ENCODE measurements at regions of chr2 and their contacts with region 1.

Region 1: DNA sequence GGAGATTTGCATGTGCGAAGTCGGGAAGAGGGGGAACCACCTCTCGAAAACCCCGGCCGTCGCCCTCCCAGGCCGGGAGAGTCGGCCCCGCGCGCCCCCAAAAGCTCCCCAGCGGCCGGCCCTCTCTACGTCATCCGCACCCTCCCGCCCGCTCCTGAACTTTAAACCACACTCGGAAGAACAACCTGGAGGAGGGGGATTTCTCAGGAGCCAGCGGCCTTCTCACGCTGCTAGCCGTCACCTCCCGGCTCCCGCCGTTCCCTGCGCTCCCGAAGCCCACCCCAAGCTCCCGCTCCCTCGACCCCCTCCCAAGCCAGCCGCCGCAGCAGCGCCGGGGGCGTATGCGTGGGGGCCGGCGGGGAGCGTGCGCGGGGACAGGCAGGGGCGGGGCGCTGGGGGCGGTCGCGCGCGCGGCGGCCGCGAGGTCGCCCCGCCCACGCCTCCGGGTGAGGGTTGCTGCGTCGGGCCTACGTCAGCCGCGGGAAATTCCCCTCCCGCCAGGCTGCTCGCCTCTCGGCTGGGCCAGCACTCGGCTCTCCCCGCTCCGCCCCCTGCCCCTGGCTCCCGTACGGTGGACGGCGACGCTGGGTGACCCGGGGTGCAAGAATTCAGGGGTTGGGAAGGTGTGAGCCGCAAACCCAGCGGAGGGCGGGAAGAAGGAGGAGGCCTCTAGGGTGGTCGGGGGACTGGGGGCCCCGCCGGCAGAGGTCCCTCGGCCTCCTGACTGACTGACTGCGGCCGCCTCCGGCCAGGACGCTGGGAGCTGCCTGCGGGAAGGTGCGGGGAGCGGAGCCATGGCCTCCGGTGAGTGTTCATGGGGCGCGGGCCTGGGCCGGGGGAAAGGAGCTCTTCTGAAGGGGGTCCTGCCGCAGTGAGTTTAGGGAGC is at the start of gene REL:
- DNase-seq: peak; percentile 87
- H3K4me3 Mint-ChIP-seq: peak within 1 kb of the TSS; percentile 99
- H3K27ac Mint-ChIP-seq: peak within 1 kb of the TSS; percentile 97
- H3K4me1 Mint-ChIP-seq: peaks cover 25% of the 10 kb centered on the region
- H3K27me3 Mint-ChIP-seq: no peaks in the 10 kb centered on the region
- total RNA-seq, gene REL: 118 and 123 TPM in 2 replicates

Region 2: GRCh38 chr2:60756191-60757041 is 124.9 kb before region 1 on chr2 and contains the start of gene PAPOLG:
- intact Hi-C with region 1: loop called (anchors 2 kb)
- DNase-seq: peak; percentile 94
- H3K4me3 Mint-ChIP-seq: peak within 1 kb of the TSS; percentile 96
- H3K27ac Mint-ChIP-seq: peak within 1 kb of the TSS; percentile 96
- H3K4me1 Mint-ChIP-seq: peaks cover 29% of the 10 kb centered on the region
- H3K27me3 Mint-ChIP-seq: no peaks in the 10 kb centered on the region
- total RNA-seq, gene PAPOLG: 20.4 and 21.2 TPM in 2 replicates

Region 3: GRCh38 chr2:60806988-60807681 is 74.2 kb before region 1 on chr2:
- intact Hi-C with region 1: loop called (anchors 2 kb)
- DNase-seq: no peak
- H3K4me3 Mint-ChIP-seq: peak overlapping the region; percentile 10
- H3K27ac Mint-ChIP-seq: peak overlapping the region; percentile 89
- H3K4me1 Mint-ChIP-seq: peaks cover 48% of the 10 kb centered on the region
- H3K27me3 Mint-ChIP-seq: no peaks in the 10 kb centered on the region

Region 4: GRCh38 chr2:61006486-61007105 is 125.3 kb after region 1 on chr2:
- intact Hi-C with region 1: no loop called
- DNase-seq: no peak
- H3K4me3 Mint-ChIP-seq: no peak overlapping the region
- H3K27ac Mint-ChIP-seq: no peak overlapping the region
- H3K4me1 Mint-ChIP-seq: no peaks in the 10 kb centered on the region
- H3K27me3 Mint-ChIP-seq: no peaks in the 10 kb centered on the region

Region 5: GRCh38 chr2:61090386-61090921 is 209.2 kb after region 1 on chr2:
- intact Hi-C with region 1: no loop called
- DNase-seq: no peak
- H3K4me3 Mint-ChIP-seq: no peak overlapping the region
- H3K27ac Mint-ChIP-seq: no peak overlapping the region
- H3K4me1 Mint-ChIP-seq: no peaks in the 10 kb centered on the region
- H3K27me3 Mint-ChIP-seq: no peaks in the 10 kb centered on the region

Region 6: DNA sequence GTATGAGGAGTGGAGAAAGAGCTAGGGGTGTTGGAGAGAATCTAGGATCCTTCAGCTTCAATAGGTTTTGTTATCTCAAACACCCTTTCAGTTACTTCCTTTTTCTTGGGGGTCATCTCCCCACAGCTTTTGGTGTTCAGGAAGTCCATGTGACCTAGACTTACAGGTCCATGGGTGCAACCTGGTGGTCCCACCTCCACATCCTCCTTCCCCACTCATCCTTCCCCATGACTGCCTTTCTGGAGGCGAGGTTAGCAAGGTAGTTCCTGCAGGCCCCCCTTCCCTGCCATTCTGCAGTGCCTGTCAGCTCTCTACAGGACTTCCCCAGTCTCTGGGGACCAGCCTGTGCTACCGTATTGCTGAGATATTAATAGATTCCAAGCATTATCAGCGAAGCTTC is 1517.1 kb after region 1 on chr2:
- intact Hi-C with region 1: no loop called
- DNase-seq: no peak
- H3K4me3 Mint-ChIP-seq: no peak overlapping the region
- H3K27ac Mint-ChIP-seq: no peak overlapping the region
- H3K4me1 Mint-ChIP-seq: no peaks in the 10 kb centered on the region
- H3K27me3 Mint-ChIP-seq: peaks cover 12% of the 10 kb centered on the region